Activated CD4-positive, alpha-beta T cell treated with anti-CD3 and anti-CD28 coated beads for 36 hours (primary cell): ENCODE measurements at regions of chr7 and their contacts with region 1.

Region 1: DNA sequence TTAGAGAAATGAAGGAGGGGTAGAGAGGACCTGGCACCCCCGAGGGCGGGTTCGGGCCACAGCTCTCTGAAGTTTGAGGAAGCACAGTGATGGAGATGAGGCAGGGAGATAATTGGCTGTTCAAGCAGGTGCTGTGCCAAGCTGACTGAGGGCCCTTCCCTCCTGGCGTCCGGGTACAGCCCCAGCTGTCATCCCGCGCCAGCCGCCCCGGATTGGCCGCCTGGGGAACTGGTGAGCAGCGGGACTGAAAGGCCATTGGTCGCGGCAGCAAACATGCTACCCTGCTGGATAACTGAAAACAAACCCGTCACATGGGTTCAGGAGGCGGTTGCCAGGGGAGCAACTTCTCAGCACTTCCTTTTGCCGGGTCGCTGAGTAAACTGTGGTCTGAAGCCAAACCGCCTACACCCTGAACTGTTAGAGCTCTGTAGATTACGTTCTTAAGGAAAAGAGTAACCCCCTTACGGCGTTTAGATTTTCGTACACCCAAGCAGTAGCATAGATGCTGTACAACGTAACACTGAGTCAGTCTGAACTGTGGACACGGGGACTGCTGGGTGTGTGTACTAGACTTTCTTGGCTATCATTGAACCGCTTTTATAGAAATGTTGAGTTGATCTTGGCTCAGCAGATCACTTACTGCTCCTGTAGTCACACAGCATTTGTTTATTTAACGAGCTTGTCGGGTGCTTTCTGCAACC is 1.3 kb downstream of the INSIG1 start:
- DNase-seq: peak; percentile 98
- ATAC-seq: peak; percentile 83
- H3K4me3 Mint-ChIP-seq: peak overlapping the region; percentile 96
- H3K27ac Mint-ChIP-seq: peak overlapping the region; percentile 93
- H3K4me1 Mint-ChIP-seq: peaks cover 33% of the 10 kb centered on the region
- H3K27me3 Mint-ChIP-seq: no peaks in the 10 kb centered on the region

Region 2: DNA sequence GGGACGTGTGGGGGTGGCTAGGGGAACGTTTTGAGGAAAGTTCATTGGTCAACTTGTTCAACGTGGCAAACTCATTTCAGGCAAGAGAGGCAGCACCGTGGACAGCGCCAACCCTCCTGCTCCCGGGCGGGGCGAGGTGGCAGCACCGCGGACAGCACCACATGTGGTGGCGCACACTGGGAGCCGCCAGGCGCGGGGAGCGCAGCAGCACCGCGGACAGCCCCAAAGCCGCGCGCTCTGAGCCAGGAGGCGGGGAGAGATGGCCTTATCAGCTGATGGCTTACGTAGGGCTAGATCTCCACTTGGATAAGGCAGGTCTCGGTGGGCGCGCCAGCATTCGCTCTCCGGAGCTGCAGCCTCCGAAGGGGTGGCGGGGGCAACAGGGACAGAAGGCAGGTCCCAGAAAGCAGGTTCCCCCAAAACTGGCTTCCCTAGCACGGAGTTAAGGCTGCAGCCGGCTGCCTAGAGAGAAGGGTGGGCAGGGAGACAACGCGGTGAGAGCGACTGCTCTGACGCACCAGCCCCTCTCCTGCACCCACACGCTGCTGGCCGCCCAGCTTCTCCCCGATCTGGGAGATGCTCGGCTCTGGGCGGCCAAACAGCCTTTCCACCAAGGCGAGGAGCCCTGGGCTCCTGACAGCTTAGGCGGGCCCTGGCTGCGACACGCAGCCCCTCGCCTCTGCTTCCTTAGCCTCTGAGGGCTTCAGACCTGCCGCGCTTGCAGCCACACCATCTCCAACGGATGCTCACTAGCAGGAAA is 228.8 kb before region 1 on chr7 and contains the start of gene HTR5A:
- CTCF ChIA-PET with region 1: interaction called, 3 read pairs
- POLR2A ChIA-PET with region 1: no interaction called
- intact Hi-C with region 1: loop called in 1 of 2 experiments (anchors 1 kb)
- DNase-seq: peak; percentile 93
- ATAC-seq: peak; percentile 100
- H3K4me3 Mint-ChIP-seq: no peak within 1 kb of the TSS
- H3K27ac Mint-ChIP-seq: no peak within 1 kb of the TSS
- H3K4me1 Mint-ChIP-seq: no peaks in the 10 kb centered on the region
- H3K27me3 Mint-ChIP-seq: peaks cover 32% of the 10 kb centered on the region
- total RNA-seq, gene HTR5A: not detected

Region 3: DNA sequence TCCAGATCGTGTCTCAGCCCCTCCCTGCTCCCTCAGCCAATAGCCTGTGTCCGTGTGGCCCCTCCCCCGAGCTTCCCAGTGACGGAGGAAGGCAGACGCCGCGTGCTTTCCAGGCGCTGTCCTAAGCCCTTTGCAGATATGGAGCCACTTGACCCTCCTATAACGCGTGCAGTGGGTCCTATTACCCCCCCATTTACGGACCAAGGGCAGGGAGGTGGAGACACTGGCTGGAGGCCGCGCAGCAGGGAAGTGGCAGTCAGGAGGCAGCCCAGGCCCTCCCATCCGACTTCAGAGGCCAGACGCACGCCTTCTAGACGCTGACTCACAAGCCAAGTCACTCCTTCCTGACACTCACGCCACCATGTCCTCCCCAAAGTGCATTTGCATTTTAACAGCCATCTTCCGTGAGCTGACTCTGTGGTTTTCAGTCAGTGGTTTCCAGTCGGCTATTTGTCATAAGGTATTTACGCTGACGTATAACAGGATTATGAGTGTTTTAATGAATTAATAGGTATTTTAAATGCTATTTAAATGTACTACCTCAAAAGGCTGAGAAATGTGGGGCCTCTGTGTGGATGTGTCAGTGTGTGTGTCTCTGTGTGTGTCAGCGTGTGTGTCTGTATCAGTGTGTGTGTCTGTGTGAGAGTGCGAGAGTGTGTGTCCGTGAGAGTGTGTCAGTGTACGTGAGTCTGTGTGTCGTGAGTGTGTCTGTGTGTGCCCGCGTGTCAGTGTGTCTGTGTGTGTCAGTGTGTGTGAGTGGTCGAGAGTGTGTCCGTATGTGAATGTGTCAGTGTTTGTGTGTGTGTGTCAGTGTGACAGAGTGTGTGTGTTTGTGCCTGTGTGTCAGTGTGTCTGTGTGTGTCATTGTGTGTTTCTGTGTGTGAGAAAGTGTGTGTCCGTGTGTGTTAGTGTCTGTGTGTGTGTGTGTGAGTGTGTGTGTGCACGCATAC is 93.3 kb before region 1 on chr7:
- CTCF ChIA-PET with region 1: interaction called, 6 read pairs
- POLR2A ChIA-PET with region 1: interaction called, 43 read pairs
- intact Hi-C with region 1: loop called (anchors 1 kb)
- DNase-seq: peak; percentile 95
- ATAC-seq: peak; percentile 84
- H3K4me3 Mint-ChIP-seq: peak overlapping the region; percentile 77
- H3K27ac Mint-ChIP-seq: peak overlapping the region; percentile 100
- H3K4me1 Mint-ChIP-seq: peaks cover 60% of the 10 kb centered on the region
- H3K27me3 Mint-ChIP-seq: no peaks in the 10 kb centered on the region

Region 4: GRCh38 chr7:155316421-155317113 is 17.6 kb after region 1 on chr7:
- CTCF ChIA-PET with region 1: no interaction called
- POLR2A ChIA-PET with region 1: no interaction called
- intact Hi-C with region 1: no loop called
- DNase-seq: no peak
- ATAC-seq: no peak
- H3K4me3 Mint-ChIP-seq: no peak overlapping the region
- H3K27ac Mint-ChIP-seq: no peak overlapping the region
- H3K4me1 Mint-ChIP-seq: no peaks in the 10 kb centered on the region
- H3K27me3 Mint-ChIP-seq: no peaks in the 10 kb centered on the region

Region 5: DNA sequence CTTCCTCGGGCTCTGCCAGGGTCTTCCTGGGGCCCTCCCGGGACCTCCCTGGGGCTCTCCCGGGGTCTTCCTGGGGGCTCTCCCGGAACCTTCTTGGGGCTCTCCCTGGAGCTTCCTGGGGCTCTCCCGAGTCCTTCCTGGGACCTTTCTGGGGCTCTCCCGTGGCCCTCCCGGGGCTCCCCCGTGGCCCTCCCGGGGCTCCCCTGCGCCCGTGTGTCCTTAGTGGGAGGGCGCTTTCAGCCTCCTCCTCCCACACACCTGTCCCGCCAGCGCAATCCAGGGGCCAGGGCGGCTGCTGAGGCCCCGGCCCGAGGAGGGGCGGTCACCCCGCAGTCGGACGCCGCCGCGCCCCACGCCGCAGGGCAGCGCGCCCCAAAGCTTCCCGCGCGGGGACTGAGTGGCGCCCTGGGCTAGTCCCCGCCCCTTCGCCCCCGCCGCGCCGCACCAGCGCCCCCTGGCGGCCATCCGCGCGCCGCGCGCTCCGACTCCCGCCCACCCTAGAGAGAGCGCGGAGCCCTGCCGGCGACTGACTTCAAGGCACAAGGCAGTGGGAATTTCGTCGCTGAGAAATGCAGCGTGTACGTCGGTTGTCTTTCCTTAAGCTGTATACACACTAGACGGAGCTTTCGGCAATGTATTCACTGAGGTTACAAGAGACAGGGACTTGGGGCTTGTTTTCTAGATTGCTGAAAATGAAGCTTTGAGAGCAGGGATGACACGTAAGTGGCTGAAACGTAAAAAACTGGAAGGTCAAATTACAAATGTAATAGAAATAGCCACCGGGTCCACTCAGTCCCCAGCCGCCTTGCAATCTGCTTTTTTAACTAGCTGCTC is 45.8 kb after region 1 on chr7:
- CTCF ChIA-PET with region 1: interaction called, 9 read pairs
- POLR2A ChIA-PET with region 1: interaction called, 5 read pairs
- intact Hi-C with region 1: loop called (anchors 1 kb)
- DNase-seq: peak; percentile 89
- ATAC-seq: peak; percentile 86
- H3K4me3 Mint-ChIP-seq: peak overlapping the region; percentile 57
- H3K27ac Mint-ChIP-seq: peak overlapping the region; percentile 16
- H3K4me1 Mint-ChIP-seq: peaks cover 14% of the 10 kb centered on the region
- H3K27me3 Mint-ChIP-seq: peaks cover 4% of the 10 kb centered on the region

Region 6: DNA sequence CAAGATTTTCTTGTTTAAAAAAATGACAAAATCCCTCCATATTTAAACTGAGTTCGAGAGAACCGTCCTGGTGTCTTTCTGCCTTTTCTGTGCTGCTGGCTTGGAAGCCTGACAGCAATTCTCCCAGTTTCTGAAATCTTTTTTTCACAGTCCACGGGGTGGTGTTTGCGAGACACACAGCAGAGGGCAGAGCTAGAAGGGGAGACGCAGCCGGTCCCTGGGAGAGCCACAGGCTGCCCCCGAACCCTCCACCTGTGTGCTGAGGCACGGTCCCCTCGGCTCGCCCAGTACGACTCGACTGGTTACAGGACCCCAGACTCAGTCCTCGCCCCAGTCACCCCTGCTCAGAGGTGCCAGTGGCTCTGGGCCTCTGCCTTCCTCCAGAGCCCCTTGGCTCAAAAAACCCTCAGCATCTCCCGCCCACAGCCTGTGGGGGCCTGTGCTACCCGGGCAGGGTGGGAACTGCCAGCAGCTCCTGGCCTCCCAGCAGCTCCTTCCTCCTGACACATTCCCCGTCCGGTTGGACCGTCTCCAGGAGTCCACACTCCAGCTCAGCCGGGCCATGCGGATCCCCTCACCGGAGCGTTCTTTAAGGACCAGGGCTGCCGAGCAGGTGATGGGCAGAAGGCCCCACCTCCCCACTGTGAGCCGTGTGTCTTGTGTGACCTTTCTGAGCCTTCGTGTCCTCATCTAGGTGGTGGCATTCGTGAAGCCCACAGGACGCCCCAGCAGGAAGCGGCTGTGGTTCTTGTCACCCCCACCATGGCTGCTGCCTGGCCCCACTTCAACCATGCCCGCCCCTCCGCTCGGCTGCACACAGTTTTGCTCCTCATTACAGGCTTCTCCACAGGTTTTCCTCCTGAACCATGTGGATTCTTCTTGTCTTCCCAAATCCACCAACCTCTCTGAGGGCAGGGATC is 106.7 kb after region 1 on chr7:
- CTCF ChIA-PET with region 1: no interaction called
- POLR2A ChIA-PET with region 1: no interaction called
- intact Hi-C with region 1: no loop called
- DNase-seq: no peak
- ATAC-seq: no peak
- H3K4me3 Mint-ChIP-seq: no peak overlapping the region
- H3K27ac Mint-ChIP-seq: no peak overlapping the region
- H3K4me1 Mint-ChIP-seq: no peaks in the 10 kb centered on the region
- H3K27me3 Mint-ChIP-seq: peaks cover 27% of the 10 kb centered on the region

Region 7: GRCh38 chr7:155560982-155561686 is 262.1 kb after region 1 on chr7:
- CTCF ChIA-PET with region 1: no interaction called
- POLR2A ChIA-PET with region 1: no interaction called
- intact Hi-C with region 1: no loop called
- DNase-seq: no peak
- ATAC-seq: no peak
- H3K4me3 Mint-ChIP-seq: no peak overlapping the region
- H3K27ac Mint-ChIP-seq: no peak overlapping the region
- H3K4me1 Mint-ChIP-seq: no peaks in the 10 kb centered on the region
- H3K27me3 Mint-ChIP-seq: peaks cover 3% of the 10 kb centered on the region

Region 8: GRCh38 chr7:155763691-155764437 is 464.9 kb after region 1 on chr7:
- CTCF ChIA-PET with region 1: no interaction called
- POLR2A ChIA-PET with region 1: no interaction called
- intact Hi-C with region 1: loop called in 1 of 2 experiments (anchors 2 kb)
- DNase-seq: peak; percentile 84
- ATAC-seq: peak; percentile 83
- H3K4me3 Mint-ChIP-seq: peak overlapping the region; percentile 74
- H3K27ac Mint-ChIP-seq: peak overlapping the region; percentile 97
- H3K4me1 Mint-ChIP-seq: peaks cover 52% of the 10 kb centered on the region
- H3K27me3 Mint-ChIP-seq: no peaks in the 10 kb centered on the region